ENCODE measurements at regions of chr2 and their contacts with region 1.

Region 1: GRCh38 chr2:7118606-7119503 is 201.6 kb downstream of the RNF144A start:
- H3K4me3 ChIP-seq: no peak overlapping the region
- H3K27ac ChIP-seq: no peak overlapping the region
- H3K4me1 ChIP-seq: no peaks in the 10 kb centered on the region
- CTCF ChIP-seq: peak; percentile 23; the same call in 1 of the 2 replicates

Region 2: GRCh38 chr2:6773007-6773693 is 345.7 kb before region 1 on chr2:
- CTCF ChIA-PET with region 1: no interaction called
- POLR2A ChIA-PET with region 1: no interaction called
- H3K4me3 ChIP-seq: no peak overlapping the region
- H3K27ac ChIP-seq: no peak overlapping the region
- H3K4me1 ChIP-seq: no peaks in the 10 kb centered on the region
- CTCF ChIP-seq: peak; percentile 83

Region 3: DNA sequence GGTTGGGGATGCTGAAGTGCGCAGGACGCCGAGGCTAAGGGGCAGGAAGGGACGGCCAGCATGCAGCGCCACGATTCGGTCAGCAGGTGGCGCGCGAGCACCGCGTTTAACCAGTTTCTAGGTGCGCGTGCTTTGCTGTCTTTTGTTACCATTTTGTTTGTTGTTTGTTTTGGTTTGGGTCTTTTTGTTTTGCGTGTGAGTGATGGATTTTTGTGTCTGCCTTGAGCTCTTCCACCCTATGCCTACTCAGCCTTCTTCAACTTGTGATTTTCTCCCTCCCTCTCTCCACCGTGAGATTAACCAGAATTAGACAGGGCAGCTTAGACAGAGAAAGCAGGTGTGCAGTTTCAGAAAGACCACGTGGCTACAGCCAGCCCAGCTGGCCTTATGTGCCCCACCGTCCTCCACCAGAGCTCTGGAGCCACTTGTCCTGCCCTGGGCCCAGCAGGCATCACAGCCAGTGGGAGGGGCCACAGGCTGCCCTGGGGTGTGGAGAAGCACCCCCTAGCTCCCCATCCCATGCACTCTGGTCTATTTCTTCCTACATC is 21.4 kb before region 1 on chr2:
- CTCF ChIA-PET with region 1: interaction called, 14 read pairs
- POLR2A ChIA-PET with region 1: no interaction called
- H3K4me3 ChIP-seq: no peak overlapping the region
- H3K27ac ChIP-seq: no peak overlapping the region
- H3K4me1 ChIP-seq: no peaks in the 10 kb centered on the region
- CTCF ChIP-seq: peak; percentile 95

Region 4: DNA sequence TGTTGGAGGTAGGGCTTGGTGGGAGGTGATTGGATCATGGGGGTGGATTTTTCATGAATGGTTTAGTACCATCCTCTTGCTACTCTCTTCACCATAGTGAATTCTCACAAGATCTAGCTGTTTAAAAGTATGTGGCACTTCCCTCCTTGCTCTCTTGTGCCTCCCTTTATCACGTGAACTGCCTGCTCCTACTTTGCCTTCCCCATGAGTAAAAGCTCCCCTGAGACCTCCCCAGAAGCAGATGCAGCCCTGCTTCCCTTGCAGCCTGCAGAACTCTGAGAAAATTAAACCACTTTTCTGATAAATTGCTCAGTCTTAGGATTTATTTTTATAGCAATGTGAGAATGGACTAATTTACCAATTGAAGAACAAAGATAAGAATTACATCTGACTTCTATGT is 21.5 kb after region 1 on chr2:
- CTCF ChIA-PET with region 1: no interaction called
- POLR2A ChIA-PET with region 1: no interaction called
- H3K4me3 ChIP-seq: no peak overlapping the region
- H3K27ac ChIP-seq: no peak overlapping the region
- H3K4me1 ChIP-seq: no peaks in the 10 kb centered on the region
- CTCF ChIP-seq: no peak